Common myeloid progenitor, CD34-positive (primary cell): ENCODE measurements at regions of chr5 and their contacts with region 1.

Region 1: GRCh38 chr5:169548315-169548714 is 35.3 kb upstream of the SPDL1 start:
- DNase-seq: peak; percentile 1 to 23 (median 18)
- H3K4me3 ChIP-seq: no peak overlapping the region
- H3K27ac ChIP-seq: no peak overlapping the region
- H3K4me1 ChIP-seq: no peaks in the 10 kb centered on the region
- H3K27me3 ChIP-seq: peaks cover 2 to 37% (median 12%) of the 10 kb centered on the region in 5 experiments

Region 2: GRCh38 chr5:168987543-168988300 is 560.6 kb before region 1 on chr5:
- CTCF ChIA-PET with region 1: interaction called, 10 read pairs
- POLR2A ChIA-PET with region 1: no interaction called
- DNase-seq: peak; percentile 47 to 70 (median 55)
- H3K4me3 ChIP-seq: no peak overlapping the region
- H3K27ac ChIP-seq: no peak overlapping the region
- H3K4me1 ChIP-seq: no peaks in the 10 kb centered on the region
- H3K27me3 ChIP-seq: peaks cover 0 to 15% (median 14%) of the 10 kb centered on the region in 5 experiments